ENCODE measurements at regions of chr10 and their contacts with region 1.

Region 1: GRCh38 chr10:101848894-101849351 is 5.3 kb upstream of the KCNIP2 start:
- DNase-seq: no peak
- H3K4me3 Mint-ChIP-seq: no peak overlapping the region
- H3K27ac Mint-ChIP-seq: no peak overlapping the region
- H3K4me1 Mint-ChIP-seq: no peaks in the 10 kb centered on the region
- H3K27me3 Mint-ChIP-seq: no peaks in the 10 kb centered on the region
- CTCF ChIP-seq: no peak

Region 2: DNA sequence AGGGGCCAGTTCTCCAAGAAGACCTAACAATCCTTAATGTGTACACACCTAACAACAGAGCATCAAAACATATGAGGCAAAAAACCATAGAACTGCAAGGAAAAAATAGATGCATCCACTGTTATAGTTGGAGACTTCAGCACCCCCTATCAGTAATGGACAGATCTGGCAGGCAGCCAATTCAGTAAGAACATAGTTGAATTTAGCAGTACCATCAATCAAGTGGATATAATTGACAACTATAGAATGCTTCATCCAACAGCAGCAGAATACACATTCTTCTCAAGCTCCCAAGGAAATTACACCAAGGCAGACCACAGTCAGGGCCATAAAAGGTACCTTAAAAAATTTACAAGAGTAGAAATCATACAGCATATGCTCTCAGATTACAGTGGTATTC is 303.0 kb before region 1 on chr10:
- CTCF ChIA-PET with region 1: no interaction called
- POLR2A ChIA-PET with region 1: no interaction called
- intact Hi-C with region 1: no loop called
- DNase-seq: no peak
- H3K4me3 Mint-ChIP-seq: no peak overlapping the region
- H3K27ac Mint-ChIP-seq: no peak overlapping the region
- H3K4me1 Mint-ChIP-seq: no peaks in the 10 kb centered on the region
- H3K27me3 Mint-ChIP-seq: no peaks in the 10 kb centered on the region
- CTCF ChIP-seq: no peak

Region 3: DNA sequence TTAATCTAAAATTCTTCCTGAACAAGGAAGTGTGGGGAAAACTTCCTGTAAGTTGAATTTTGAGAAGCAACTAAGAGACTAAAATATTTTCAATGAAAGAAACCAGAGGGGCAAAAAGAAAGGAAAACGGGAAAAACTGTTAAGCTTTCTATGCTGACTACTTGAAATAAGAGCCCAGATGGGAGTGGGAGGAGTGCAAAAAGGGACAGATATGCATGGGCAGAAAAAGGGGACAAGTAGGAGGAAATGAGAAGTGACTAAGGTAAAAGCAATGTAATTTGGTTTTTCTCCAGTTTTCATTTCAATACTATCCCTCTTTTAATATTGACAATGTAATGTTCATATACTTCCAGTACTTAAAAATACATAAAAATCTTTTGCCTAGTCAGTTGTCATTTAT is 41.8 kb before region 1 on chr10:
- CTCF ChIA-PET with region 1: no interaction called
- POLR2A ChIA-PET with region 1: no interaction called
- intact Hi-C with region 1: no loop called
- DNase-seq: no peak
- H3K4me3 Mint-ChIP-seq: no peak overlapping the region
- H3K27ac Mint-ChIP-seq: no peak overlapping the region
- H3K4me1 Mint-ChIP-seq: no peaks in the 10 kb centered on the region
- H3K27me3 Mint-ChIP-seq: no peaks in the 10 kb centered on the region
- CTCF ChIP-seq: no peak

Region 4: GRCh38 chr10:101830322-101831168 is 18.4 kb before region 1 on chr10:
- CTCF ChIA-PET with region 1: interaction called, 25 read pairs
- POLR2A ChIA-PET with region 1: no interaction called
- intact Hi-C with region 1: no loop called
- DNase-seq: peak; percentile 87
- H3K4me3 Mint-ChIP-seq: peak overlapping the region; percentile 80
- H3K27ac Mint-ChIP-seq: peak overlapping the region; percentile 75
- H3K4me1 Mint-ChIP-seq: peaks cover 25% of the 10 kb centered on the region
- H3K27me3 Mint-ChIP-seq: no peaks in the 10 kb centered on the region
- CTCF ChIP-seq: no peak

Measured in MCF 10A (cell line).